ENCODE measurements at regions of chr7 and their contacts with region 1.

Region 1: DNA sequence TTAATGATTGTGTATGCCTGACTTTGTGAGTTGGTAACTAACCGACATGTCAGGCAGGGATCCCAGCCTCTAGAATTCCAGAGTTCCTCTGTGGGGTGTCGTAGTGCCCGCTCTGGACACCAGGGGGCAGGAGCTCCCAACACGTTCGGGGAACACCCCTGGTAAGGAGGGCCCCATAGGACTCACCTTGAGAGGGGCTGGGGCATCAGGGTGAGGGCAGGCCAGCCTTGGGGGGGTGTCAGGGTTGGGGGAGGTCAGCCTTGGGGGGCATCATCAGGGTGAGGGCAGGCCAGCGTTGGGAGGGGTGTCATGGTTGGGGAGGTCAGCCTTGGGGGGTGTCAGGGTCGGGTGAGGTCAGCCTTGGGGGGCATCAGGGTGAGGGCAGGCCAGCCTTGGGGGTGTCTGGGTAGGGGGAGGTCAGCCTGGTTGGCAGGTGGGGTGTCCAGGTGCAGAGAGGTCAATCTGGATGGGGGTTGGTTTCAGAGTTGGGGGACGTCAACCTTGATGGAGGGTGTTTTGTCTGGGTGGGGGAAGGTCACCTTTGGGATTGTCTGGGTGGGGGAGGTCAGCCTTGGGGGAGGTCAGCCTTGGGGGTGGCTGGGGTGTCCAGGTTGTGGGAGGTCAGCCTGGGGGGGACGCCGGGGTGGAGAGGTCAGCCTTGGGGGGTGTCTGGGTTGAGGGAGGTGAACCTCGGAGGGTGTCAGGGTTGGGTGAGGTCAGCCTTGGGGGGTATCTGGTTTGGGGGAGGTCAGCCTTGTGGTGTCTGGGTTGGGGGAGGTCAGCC is 45.6 kb upstream of the SUN1 start:
- DNase-seq: peak; percentile 84
- H3K4me3 ChIP-seq: no peak overlapping the region
- H3K27ac ChIP-seq: no peak overlapping the region
- H3K4me1 ChIP-seq: peaks cover 0 to 6% (median 1%) of the 10 kb centered on the region in 6 donors
- H3K27me3 ChIP-seq: no peaks in the 10 kb centered on the region
- CTCF ChIP-seq: peak; percentile 67 to 89 (median 83)
- POLR2A ChIP-seq: no peak

Region 2: GRCh38 chr7:831596-832166 is 45.0 kb after region 1 on chr7:
- intact Hi-C with region 1: loop called (anchors 10 kb)
- DNase-seq: no peak
- H3K4me3 ChIP-seq: peak overlapping the region in 2 of 8 donors; percentile 4 to 35
- H3K27ac ChIP-seq: peak overlapping the region; percentile 23 to 82 (median 74)
- H3K4me1 ChIP-seq: peaks cover 21 to 89% (median 58%) of the 10 kb centered on the region in 6 donors
- H3K27me3 ChIP-seq: no peaks in the 10 kb centered on the region
- CTCF ChIP-seq: no peak
- POLR2A ChIP-seq: no peak

Region 3: GRCh38 chr7:873367-874002 is 86.8 kb after region 1 on chr7:
- intact Hi-C with region 1: loop called (anchors 5 kb)
- DNase-seq: peak; percentile 92
- H3K4me3 ChIP-seq: no peak overlapping the region
- H3K27ac ChIP-seq: peak overlapping the region; percentile 39 to 80 (median 68)
- H3K4me1 ChIP-seq: peaks cover 18 to 67% (median 45%) of the 10 kb centered on the region in 6 donors
- H3K27me3 ChIP-seq: no peaks in the 10 kb centered on the region
- CTCF ChIP-seq: peak; percentile 79 to 97 (median 94)
- POLR2A ChIP-seq: no peak

Measured in spleen (tissue), 13 donors.